Head of caudate nucleus (tissue), 42 donors: ENCODE measurements at regions of chr6 and their contacts with region 1.

Region 1: DNA sequence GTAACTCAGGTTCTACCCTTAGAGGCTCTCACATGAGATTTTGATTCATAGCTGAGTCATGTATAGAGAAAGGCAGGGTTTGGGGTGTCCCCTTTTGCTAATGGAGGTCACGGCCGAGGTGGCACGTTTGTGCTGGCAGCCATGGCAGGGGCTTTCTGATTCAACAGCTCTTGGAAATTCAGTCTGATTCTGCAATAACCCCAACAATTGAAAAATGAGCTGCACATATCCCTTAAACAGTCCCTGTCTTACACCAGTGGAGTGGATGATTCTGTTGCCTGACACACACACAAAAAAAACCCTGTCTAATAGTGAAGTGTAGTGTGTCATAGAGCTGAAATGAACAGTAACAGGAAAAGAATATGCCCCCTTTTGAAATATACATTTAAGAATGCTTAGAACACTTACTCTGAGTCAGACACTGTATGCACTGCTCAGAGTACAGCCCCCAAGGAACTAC is 40.4 kb upstream of the ARG1 start:
- DNase-seq: no peak

Region 2: DNA sequence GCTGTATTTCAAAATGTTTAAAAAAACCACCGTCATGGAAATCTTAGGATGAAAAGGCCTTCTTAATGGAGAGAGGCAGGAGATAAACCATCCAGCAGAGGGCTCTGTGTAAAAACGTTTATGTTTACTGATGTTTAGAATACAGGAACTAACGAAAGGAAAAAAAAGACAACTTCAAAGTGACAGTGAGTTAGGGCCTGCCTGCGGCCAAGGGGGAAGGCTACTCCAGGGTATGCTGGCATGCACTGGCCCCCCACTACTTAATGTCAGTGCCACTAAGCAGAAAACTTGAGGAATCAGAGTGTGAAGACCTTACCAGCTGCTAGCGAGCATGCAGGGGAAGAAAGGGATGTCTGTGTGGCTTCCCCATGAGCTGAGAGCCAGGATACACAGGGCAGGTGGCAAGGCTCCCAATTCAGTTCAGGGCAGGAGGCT is 349.6 kb before region 1 on chr6:
- intact Hi-C with region 1: loop called (anchors 10 kb)
- DNase-seq: peak in 8 of 42 donors; percentile 27 to 63 (median 46)